Sigmoid colon (tissue), 7 donors: ENCODE measurements at regions of chr10 and their contacts with region 1.

Region 1: DNA sequence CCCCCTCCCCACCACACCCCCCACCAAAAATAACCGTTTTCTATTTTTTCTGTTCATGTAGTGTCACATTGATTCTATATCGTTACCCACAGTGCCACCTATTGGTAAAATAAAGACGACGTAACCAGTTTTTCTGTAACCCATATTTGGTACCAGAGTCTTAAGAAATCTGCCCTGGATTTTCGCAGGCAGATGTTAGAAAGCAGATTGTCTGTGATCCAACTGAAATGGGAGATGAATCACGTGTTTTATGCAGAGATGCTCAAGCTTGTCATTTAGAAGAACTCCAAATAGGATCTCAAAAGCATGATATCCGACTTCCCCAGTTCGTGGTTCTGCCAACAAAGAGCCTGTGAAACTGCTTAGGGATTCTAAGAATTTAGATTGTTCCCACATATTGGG is 261.1 kb upstream of the CSTF2T start:
- DNase-seq: no peak
- H3K4me3 ChIP-seq: no peak overlapping the region
- H3K27ac ChIP-seq: peak overlapping the region in 2 of 4 donors; percentile 2 to 51
- H3K4me1 ChIP-seq: peaks cover 0 to 21% (median 4%) of the 10 kb centered on the region in 4 donors
- H3K27me3 ChIP-seq: no peaks in the 10 kb centered on the region
- CTCF ChIP-seq: peak; percentile 10 to 51 (median 44)
- EP300 ChIP-seq: no peak
- POLR2A ChIP-seq: no peak

Region 2: DNA sequence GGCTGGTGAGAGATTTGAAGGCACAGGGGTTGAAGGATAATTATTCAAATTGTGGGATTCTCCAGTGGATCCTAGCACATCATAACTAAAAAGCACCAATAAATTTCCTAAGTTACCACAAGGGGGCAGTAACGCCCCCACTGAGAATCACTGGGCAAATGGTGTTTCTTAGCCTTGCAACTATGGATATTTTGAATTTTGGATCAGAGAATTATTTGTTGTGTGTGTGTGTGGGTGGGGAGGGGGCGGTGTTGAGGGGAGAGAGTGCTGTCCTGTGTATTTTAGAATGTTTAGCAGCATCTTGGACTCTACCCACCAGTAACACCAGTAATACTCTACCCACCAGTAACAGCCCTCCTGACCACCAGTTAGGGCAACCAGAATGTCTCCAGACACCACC is 949.5 kb before region 1 on chr10:
- intact Hi-C with region 1: loop called (anchors 5 kb)
- DNase-seq: no peak
- H3K4me3 ChIP-seq: no peak overlapping the region
- H3K27ac ChIP-seq: no peak overlapping the region
- H3K4me1 ChIP-seq: peaks cover 0 to 10% (median 6%) of the 10 kb centered on the region in 4 donors
- H3K27me3 ChIP-seq: no peaks in the 10 kb centered on the region
- CTCF ChIP-seq: peak; percentile 46 to 85 (median 79)
- EP300 ChIP-seq: no peak
- POLR2A ChIP-seq: no peak

Region 3: DNA sequence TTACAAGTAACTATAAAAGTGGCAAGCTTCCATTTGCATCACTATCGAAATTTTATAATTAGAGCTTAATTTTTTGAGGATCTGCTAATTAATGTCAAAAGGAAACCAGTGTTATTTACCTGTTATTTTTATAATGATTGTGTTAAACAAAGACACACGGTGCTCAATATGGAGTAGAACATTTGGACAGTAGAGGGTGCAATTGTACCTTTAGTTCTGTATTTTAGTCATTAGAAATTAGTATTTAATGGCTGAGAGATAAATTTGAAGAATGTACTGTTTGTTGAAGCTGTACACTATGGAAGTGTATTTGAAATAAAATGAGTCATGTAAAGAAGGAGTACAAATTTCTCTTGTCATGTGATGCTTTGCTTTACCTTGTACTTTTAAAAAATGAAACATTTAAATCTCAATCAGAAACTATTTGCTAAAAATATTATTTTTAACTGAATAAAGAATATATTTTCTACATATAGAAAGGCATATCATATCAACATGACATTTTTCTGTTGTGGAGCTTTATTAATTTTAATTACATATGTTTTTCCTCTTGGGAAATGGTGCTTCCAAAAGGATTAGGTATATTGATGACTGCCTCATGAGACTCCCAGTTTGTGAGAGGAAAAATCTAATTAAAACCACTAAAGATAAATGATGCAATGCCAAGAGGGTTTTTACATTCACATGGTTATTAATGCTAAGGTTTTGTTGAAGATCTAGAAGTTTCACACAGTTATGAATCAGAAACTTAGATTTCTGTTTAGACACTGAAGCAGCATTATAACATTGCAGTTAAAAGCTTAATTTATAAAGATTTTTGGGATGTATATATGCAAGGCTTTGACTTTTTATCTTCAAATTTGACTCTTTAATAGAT is 896.6 kb before region 1 on chr10:
- intact Hi-C with region 1: loop called (anchors 5 kb)
- DNase-seq: no peak
- H3K4me3 ChIP-seq: no peak overlapping the region
- H3K27ac ChIP-seq: no peak overlapping the region
- H3K4me1 ChIP-seq: peaks cover 0 to 13% (median 0%) of the 10 kb centered on the region in 4 donors
- H3K27me3 ChIP-seq: no peaks in the 10 kb centered on the region
- CTCF ChIP-seq: peak; percentile 33 to 63 (median 40)
- EP300 ChIP-seq: no peak
- POLR2A ChIP-seq: no peak

Region 4: GRCh38 chr10:51699475-51700227 is 260.8 kb before region 1 on chr10 and contains the start of gene CSTF2T:
- intact Hi-C with region 1: loop called (anchors 5 kb)
- DNase-seq: peak; percentile 95
- H3K4me3 ChIP-seq: peak within 1 kb of the TSS; percentile 66 to 80 (median 76)
- H3K27ac ChIP-seq: peak within 1 kb of the TSS; percentile 88 to 94 (median 91)
- H3K4me1 ChIP-seq: peaks cover 0 to 52% (median 41%) of the 10 kb centered on the region in 4 donors
- H3K27me3 ChIP-seq: no peaks in the 10 kb centered on the region
- CTCF ChIP-seq: no peak
- EP300 ChIP-seq: no peak
- POLR2A ChIP-seq: peak; percentile 68 to 79
- total RNA-seq, gene CSTF2T: 10.8 to 21.2 (median 18.5) TPM

Region 5: GRCh38 chr10:51706225-51706624 is 254.3 kb before region 1 on chr10:
- intact Hi-C with region 1: loop called (anchors 5 kb)
- DNase-seq: peak; percentile 97
- H3K4me3 ChIP-seq: no peak overlapping the region
- H3K27ac ChIP-seq: peak overlapping the region; percentile 79 to 82 (median 81)
- H3K4me1 ChIP-seq: peaks cover 0 to 57% (median 49%) of the 10 kb centered on the region in 4 donors
- H3K27me3 ChIP-seq: no peaks in the 10 kb centered on the region
- CTCF ChIP-seq: no peak
- EP300 ChIP-seq: peak in 3 of 4 donors; percentile 61 to 83 (median 81)
- POLR2A ChIP-seq: no peak